ENCODE measurements at regions of chr3 and their contacts with region 1.

Region 1: GRCh38 chr3:121654493-121655385 is 6.0 kb downstream of the HCLS1 start:
- DNase-seq: no peak
- ATAC-seq: no peak
- H3K4me3 ChIP-seq: no peak overlapping the region
- H3K27ac ChIP-seq: peak overlapping the region in 1 of 12 donors; percentile 18
- H3K4me1 ChIP-seq: peaks cover 0 to 50% (median 8%) of the 10 kb centered on the region in 12 donors
- H3K27me3 ChIP-seq: no peaks in the 10 kb centered on the region
- CTCF ChIP-seq: no peak
- POLR2A ChIP-seq: no peak

Region 2: GRCh38 chr3:121443456-121443855 is 211.3 kb before region 1 on chr3:
- intact Hi-C with region 1: no loop called
- DNase-seq: no peak
- ATAC-seq: no peak
- H3K4me3 ChIP-seq: no peak overlapping the region
- H3K27ac ChIP-seq: no peak overlapping the region
- H3K4me1 ChIP-seq: no peaks in the 10 kb centered on the region
- H3K27me3 ChIP-seq: no peaks in the 10 kb centered on the region
- CTCF ChIP-seq: no peak
- POLR2A ChIP-seq: no peak

Region 3: GRCh38 chr3:121598564-121598963 is 56.2 kb before region 1 on chr3:
- intact Hi-C with region 1: loop called in 4 of 10 experiments (anchors 2 to 10 kb)
- DNase-seq: no peak
- ATAC-seq: no peak
- H3K4me3 ChIP-seq: no peak overlapping the region
- H3K27ac ChIP-seq: peak overlapping the region in 8 of 12 donors; percentile 8 to 95 (median 87)
- H3K4me1 ChIP-seq: peaks cover 0 to 56% (median 26%) of the 10 kb centered on the region in 12 donors
- H3K27me3 ChIP-seq: no peaks in the 10 kb centered on the region
- CTCF ChIP-seq: no peak
- POLR2A ChIP-seq: no peak

Measured in heart left ventricle (tissue), 16 donors.